ENCODE measurements at regions of chr3 and their contacts with region 1.

Region 1: GRCh38 chr3:142723968-142724681 is at the start of gene TRPC1:
- DNase-seq: peak; percentile 76
- H3K4me3 Mint-ChIP-seq: peak within 1 kb of the TSS; percentile 86
- H3K27ac Mint-ChIP-seq: peak within 1 kb of the TSS; percentile 80
- H3K4me1 Mint-ChIP-seq: peaks cover 4% of the 10 kb centered on the region
- H3K27me3 Mint-ChIP-seq: peaks cover 56% of the 10 kb centered on the region
- total RNA-seq, gene TRPC1: 1.4 and 2.5 TPM in 2 replicates

Region 2: GRCh38 chr3:142706321-142707127 is 17.6 kb before region 1 on chr3:
- intact Hi-C with region 1: loop called (anchors 2 kb)
- DNase-seq: no peak
- H3K4me3 Mint-ChIP-seq: no peak overlapping the region
- H3K27ac Mint-ChIP-seq: no peak overlapping the region
- H3K4me1 Mint-ChIP-seq: peaks cover 10% of the 10 kb centered on the region
- H3K27me3 Mint-ChIP-seq: no peaks in the 10 kb centered on the region